MCF 10A (cell line): ENCODE measurements at regions of chr17 and their contacts with region 1.

Region 1: DNA sequence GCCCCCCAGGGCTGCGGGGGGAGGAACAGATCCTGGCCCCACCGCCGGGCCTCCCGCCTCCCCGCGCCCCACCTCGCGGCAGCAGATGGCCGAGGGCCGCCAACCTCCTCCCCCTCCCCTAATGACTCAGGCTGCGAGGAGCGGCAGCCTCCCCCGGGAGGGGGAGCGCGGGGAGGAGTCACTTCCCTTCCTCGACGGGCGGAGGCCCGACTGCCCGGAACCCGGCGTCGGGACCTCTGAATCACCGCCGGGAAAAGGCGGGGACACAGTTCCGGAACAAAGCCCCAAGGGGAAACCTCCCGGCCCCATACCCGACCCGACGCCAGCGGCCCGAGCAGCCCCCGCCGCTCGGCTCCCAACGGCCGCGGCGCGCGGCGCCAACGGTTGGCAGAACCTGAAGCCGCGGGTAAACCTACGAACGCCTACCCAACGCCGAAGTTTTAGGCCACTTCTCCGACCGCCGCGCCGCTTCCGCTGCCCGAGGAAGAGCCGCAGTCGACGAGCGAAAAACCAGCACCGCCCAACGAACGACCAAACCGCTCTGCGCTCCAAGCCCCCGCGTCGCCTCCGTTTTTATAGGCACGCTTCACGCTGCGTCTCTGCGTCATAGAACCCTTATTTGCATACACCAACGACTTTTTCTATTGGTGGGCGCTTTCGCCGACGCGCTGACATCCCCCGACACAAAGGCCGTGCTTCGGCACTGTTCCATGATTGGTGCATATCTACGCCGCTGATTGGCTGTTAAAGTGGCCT is 5.2 kb upstream of the UNK start:
- DNase-seq: peak; percentile 100
- H3K4me3 Mint-ChIP-seq: peak overlapping the region; percentile 93
- H3K27ac Mint-ChIP-seq: peak overlapping the region; percentile 100
- H3K4me1 Mint-ChIP-seq: peaks cover 18% of the 10 kb centered on the region
- H3K27me3 Mint-ChIP-seq: no peaks in the 10 kb centered on the region
- CTCF ChIP-seq: no peak

Region 2: GRCh38 chr17:74520016-74520434 is 1259.4 kb before region 1 on chr17:
- CTCF ChIA-PET with region 1: no interaction called
- POLR2A ChIA-PET with region 1: no interaction called
- intact Hi-C with region 1: no loop called
- DNase-seq: no peak
- H3K4me3 Mint-ChIP-seq: no peak overlapping the region
- H3K27ac Mint-ChIP-seq: no peak overlapping the region
- H3K4me1 Mint-ChIP-seq: peaks cover 5% of the 10 kb centered on the region
- H3K27me3 Mint-ChIP-seq: peaks cover 27% of the 10 kb centered on the region
- CTCF ChIP-seq: no peak

Region 3: DNA sequence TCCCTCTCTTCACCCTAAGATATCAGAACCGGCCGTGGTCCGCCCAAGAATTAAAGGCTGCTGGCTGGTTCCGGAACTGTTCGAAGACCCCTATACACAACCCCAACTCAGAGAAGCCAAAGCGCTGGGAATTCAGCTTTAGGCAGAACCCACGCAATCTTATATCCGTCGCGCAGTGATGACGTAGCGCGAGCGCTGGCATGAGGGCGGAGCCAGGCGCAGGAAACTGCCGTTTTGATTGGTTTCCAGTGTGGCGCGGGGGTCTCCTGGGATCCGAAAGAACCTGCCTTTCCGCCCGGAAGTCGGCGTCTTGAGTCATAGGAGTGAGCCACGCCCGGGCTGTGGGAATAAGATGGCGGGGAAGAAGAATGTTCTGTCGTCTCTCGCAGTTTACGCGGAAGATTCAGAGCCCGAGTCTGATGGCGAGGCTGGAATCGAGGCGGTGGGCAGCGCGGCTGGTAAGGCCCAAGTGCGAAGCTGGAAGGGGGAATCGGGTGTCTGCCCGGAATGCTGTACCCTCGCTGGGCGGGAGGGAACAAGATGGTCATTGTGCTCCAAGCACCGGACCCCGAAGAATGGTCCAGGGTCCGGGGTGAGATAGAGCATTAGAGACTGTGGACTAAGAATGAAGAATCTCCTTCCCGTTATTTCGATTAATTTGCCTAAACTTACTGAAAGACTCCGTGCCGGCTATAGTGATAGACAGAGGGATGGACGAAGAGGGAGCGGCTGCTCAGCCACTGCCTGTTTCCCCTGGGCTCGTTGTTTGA is 112.2 kb before region 1 on chr17 and contains the starts of genes RECQL5 and SAP30BP:
- CTCF ChIA-PET with region 1: no interaction called
- POLR2A ChIA-PET with region 1: interaction called, 24 read pairs
- intact Hi-C with region 1: no loop called
- DNase-seq: peak; percentile 99
- H3K4me3 Mint-ChIP-seq: no peak within 1 kb of the TSS
- H3K27ac Mint-ChIP-seq: no peak within 1 kb of the TSS
- H3K4me1 Mint-ChIP-seq: peaks cover 15% of the 10 kb centered on the region
- H3K27me3 Mint-ChIP-seq: no peaks in the 10 kb centered on the region
- CTCF ChIP-seq: no peak
- total RNA-seq, gene RECQL5: 36.3 and 47.9 TPM in 2 replicates
- total RNA-seq, gene SAP30BP: 108 and 123 TPM in 2 replicates

Region 4: DNA sequence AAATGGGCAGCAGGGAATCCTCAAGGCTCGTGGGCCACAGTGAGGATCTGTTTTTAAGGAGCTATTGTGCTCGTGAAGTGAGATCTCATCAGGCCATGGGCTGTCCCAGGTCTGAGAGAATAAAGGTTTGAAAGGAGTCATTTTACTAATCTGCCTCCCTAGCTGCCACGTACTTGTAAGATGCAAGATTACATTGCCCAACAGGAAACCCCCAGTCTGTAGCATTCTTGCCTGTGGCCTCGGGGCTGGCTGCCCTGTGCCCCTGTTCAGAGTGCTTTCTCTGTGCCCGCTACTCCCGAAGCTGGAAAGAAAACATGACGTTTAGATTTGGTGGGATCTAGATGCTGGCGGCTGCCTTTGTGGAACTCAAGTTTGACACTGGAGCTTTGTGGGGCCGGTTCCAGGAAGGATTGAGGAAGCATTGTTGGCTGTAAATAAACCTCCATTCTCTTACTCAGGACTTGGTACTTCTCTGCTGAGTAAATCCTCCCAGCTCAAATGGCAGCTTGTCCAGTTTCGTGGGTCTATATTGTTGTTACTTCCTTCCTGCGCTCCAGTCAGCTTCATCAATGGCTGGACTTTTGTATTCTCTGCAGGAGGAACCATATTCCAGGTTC is 91.1 kb before region 1 on chr17:
- CTCF ChIA-PET with region 1: interaction called, 3 read pairs
- POLR2A ChIA-PET with region 1: interaction called, 31 read pairs
- intact Hi-C with region 1: no loop called
- DNase-seq: peak; percentile 81
- H3K4me3 Mint-ChIP-seq: peak overlapping the region; percentile 0
- H3K27ac Mint-ChIP-seq: peak overlapping the region; percentile 90
- H3K4me1 Mint-ChIP-seq: peaks cover 75% of the 10 kb centered on the region
- H3K27me3 Mint-ChIP-seq: no peaks in the 10 kb centered on the region
- CTCF ChIP-seq: no peak

Region 5: GRCh38 chr17:75764711-75765421 is 14.5 kb before region 1 on chr17 and contains the start of gene GALK1:
- CTCF ChIA-PET with region 1: interaction called, 6 read pairs
- POLR2A ChIA-PET with region 1: interaction called, 153 read pairs
- intact Hi-C with region 1: no loop called
- DNase-seq: peak; percentile 69
- H3K4me3 Mint-ChIP-seq: peak within 1 kb of the TSS; percentile 69
- H3K27ac Mint-ChIP-seq: peak within 1 kb of the TSS; percentile 35
- H3K4me1 Mint-ChIP-seq: peaks cover 15% of the 10 kb centered on the region
- H3K27me3 Mint-ChIP-seq: no peaks in the 10 kb centered on the region
- CTCF ChIP-seq: peak; percentile 53
- total RNA-seq, gene GALK1: 8.7 and 9.8 TPM in 2 replicates

Region 6: DNA sequence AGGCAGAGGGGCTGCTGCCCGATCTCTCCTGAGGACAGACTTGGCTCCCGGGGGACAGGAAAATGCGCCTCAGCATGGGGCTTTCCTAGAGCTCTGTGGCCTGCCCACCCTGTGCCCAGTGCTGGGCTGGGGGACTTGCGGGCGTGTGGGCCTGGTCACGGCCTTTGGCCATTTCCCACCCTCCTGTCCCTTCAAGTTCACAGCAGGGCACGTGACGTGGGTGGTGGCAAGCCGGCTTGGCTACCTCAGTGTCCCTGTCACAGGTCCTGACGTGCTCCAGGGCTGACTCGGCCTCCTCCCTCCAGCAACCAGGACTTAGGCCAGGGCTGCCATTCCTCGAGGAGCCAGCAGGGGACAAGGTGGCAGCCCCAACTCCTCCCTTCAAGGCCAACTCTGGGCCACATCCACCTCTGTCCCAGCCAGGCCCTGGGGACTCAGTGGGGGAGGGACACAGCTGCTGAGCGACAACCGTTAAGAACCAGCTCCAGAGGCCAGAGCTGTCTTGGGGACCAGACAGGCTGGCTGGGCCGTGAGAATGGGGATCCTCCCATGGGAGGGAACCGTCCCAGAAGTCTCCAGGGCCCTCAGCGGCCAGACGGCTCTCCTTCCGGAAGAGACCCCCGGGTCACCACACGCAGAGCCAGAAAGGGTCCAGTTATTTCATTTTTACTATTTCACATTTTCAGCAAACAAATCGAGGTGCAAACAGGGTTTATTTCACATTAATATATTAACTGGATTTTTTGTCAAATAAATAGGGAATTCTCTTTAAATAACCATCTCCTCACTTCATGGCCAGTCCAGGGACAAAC is 65.8 kb after region 1 on chr17:
- CTCF ChIA-PET with region 1: interaction called, 6 read pairs
- POLR2A ChIA-PET with region 1: interaction called, 11 read pairs
- intact Hi-C with region 1: no loop called
- DNase-seq: peak; percentile 77
- H3K4me3 Mint-ChIP-seq: peak overlapping the region; percentile 16
- H3K27ac Mint-ChIP-seq: no peak overlapping the region
- H3K4me1 Mint-ChIP-seq: peaks cover 14% of the 10 kb centered on the region
- H3K27me3 Mint-ChIP-seq: no peaks in the 10 kb centered on the region
- CTCF ChIP-seq: peak; percentile 81

Region 7: GRCh38 chr17:75896415-75897159 is 117.2 kb after region 1 on chr17 and contains the start of gene TRIM65:
- CTCF ChIA-PET with region 1: no interaction called
- POLR2A ChIA-PET with region 1: interaction called, 18 read pairs
- intact Hi-C with region 1: no loop called
- DNase-seq: peak; percentile 71
- H3K4me3 Mint-ChIP-seq: peak within 1 kb of the TSS; percentile 74
- H3K27ac Mint-ChIP-seq: peak within 1 kb of the TSS; percentile 70
- H3K4me1 Mint-ChIP-seq: peaks cover 19% of the 10 kb centered on the region
- H3K27me3 Mint-ChIP-seq: no peaks in the 10 kb centered on the region
- CTCF ChIP-seq: peak; percentile 14
- total RNA-seq, gene TRIM65: 15.9 and 17.4 TPM in 2 replicates